ENCODE measurements at regions of chr21 and their contacts with region 1.

Region 1: DNA sequence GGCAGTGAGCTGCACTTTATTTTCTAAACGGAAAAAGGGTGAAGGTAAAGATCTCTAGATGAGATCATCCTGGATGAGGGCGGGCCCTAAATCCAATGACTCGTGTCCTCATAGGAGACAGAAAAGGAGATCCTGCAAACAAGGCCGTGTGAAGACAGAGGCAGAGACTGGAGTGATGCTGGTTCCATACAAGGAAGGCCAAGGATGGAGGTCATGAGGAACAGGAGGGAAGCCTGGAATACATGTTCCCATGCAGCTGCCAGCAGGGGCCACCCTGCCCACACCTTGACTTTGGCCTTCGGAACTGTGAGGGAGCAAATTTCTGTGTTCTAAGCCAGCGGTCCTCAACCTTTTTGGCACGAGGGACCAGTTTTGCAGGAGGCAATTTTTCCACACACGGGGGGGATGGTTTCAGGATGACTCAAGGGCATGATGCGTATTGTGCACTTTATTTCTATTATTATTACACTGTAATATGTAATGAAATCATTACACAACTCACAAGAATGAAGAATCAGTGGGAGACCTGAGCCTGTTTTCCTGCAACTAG is 94.3 kb downstream of the PSMG1 start:
- DNase-seq: peak in 1 of 2 donors; percentile 47
- ATAC-seq: peak in 6 of 8 donors; percentile 34 to 58 (median 47)
- H3K4me3 ChIP-seq: no peak overlapping the region
- H3K27ac ChIP-seq: peak overlapping the region in 7 of 10 donors; percentile 88 to 98 (median 95)
- H3K4me1 ChIP-seq: peaks cover 2 to 59% (median 33%) of the 10 kb centered on the region in 9 donors
- H3K27me3 ChIP-seq: no peaks in the 10 kb centered on the region
- CTCF ChIP-seq: peak in 6 of 9 donors; percentile 10 to 43 (median 28)

Region 2: DNA sequence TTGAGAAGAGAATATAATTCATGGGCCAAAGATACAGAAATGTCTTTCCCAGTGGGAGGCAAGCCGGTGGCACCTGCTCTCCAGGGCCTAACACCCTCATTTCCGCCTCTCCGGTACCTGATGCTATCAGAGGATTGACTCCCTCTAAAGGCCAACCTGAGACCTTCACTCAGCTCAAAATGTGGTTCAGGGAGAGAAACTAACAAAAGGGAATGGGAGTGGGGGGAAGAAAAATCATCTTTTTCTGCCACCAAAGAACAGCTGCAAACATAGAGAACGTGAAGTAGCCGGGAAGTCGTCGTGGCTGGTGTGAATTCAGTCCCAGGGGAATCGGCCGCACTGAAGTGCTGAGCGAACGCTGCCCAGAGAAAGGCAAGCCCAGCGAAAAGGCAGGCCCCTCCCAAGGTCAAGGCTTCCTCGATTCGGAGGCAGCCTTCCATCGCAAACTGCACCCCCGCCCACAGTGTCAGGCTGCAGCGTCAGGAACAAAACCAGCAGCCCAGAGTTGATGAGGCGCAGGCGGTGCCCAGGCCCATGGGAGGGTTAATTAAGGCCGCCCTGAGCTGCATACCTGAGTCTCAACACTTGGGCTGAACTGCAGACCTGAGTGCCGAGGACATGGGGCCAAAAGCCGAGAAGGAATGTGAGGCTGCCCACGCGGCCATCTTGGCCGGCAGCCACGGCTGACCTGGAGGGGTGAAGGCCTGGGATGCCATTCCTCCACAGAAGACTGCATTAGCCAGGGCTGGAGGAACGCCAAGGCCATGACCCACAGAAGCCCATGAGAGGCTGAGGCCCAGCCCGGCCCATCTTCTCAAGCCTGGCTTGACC is 65.8 kb before region 1 on chr21:
- intact Hi-C with region 1: loop called in 1 of 10 experiments (anchors 5 kb)
- DNase-seq: peak; percentile 80 to 82
- ATAC-seq: peak; percentile 81 to 95 (median 86)
- H3K4me3 ChIP-seq: peak overlapping the region in 2 of 10 donors; percentile 4 to 6
- H3K27ac ChIP-seq: peak overlapping the region; percentile 6 to 87 (median 74)
- H3K4me1 ChIP-seq: peaks cover 11 to 40% (median 34%) of the 10 kb centered on the region in 9 donors
- H3K27me3 ChIP-seq: no peaks in the 10 kb centered on the region
- CTCF ChIP-seq: peak in 8 of 9 donors; percentile 14 to 57 (median 32)

Region 3: DNA sequence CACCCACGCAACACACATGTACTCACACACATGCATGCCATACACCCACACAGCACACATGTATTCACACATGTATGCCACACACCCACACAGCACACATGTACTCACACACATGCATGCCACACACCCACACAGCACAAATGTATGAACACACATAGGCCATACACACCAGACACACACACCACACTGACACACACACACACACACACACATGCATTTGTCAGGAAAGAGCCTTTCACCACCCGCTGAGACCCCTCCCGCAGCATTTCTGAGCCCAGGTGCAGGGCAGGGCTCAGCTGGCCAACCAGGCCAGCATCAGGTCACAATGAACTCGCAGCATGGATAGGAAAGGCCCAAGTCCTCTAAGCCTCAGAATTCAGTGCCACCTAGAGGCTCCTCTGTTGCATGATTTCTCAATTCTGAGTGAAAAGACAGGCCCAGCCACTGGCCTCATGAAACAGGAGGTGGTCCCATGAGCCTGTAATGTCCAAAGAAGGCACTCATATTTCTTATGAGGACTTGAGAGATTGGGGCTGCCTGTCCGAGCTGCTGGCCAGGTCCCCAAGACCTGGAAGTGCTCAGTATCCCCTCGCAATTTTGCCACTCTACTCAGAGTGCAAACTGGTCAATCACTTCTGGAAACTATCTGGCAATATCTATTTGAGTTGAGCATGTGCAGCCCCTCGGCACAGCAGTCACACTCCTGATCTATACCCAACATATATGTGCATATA is 37.0 kb after region 1 on chr21:
- intact Hi-C with region 1: loop called in 2 of 10 experiments (anchors 5 kb)
- DNase-seq: peak in 1 of 2 donors; percentile 67
- ATAC-seq: peak; percentile 89 to 96 (median 94)
- H3K4me3 ChIP-seq: no peak overlapping the region
- H3K27ac ChIP-seq: peak overlapping the region in 4 of 10 donors; percentile 4 to 68 (median 52)
- H3K4me1 ChIP-seq: peaks cover 0 to 25% (median 13%) of the 10 kb centered on the region in 9 donors
- H3K27me3 ChIP-seq: no peaks in the 10 kb centered on the region
- CTCF ChIP-seq: peak; percentile 43 to 81 (median 69)

Region 4: DNA sequence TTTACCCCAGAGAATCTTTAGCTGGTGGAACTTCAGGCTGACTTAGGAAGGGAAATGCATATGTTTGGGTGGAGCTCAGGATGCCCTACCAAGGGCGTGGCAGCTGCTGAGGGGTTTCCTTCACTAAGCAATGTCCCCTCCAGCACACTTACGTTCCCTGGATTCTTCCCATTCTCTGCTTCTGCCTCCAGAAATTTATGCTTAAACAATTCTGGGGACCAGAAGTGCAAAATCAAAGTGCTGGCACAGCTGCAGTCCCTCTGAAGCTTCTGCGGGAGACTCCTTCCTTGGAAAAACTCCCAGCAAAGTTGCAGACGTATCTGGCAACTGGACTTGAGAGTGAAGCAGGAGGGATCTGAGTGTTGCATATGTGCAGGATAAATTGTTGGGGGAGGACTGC is 1181.1 kb after region 1 on chr21:
- intact Hi-C with region 1: no loop called
- DNase-seq: no peak
- ATAC-seq: peak in 1 of 8 donors; percentile 29
- H3K4me3 ChIP-seq: no peak overlapping the region
- H3K27ac ChIP-seq: no peak overlapping the region
- H3K4me1 ChIP-seq: peaks cover 0 to 9% (median 0%) of the 10 kb centered on the region in 9 donors
- H3K27me3 ChIP-seq: peaks cover 0 to 4% (median 0%) of the 10 kb centered on the region in 7 donors
- CTCF ChIP-seq: no peak